Breast epithelium (tissue), 4 donors: ENCODE measurements at regions of chr13 and their contacts with region 1.

Region 1: DNA sequence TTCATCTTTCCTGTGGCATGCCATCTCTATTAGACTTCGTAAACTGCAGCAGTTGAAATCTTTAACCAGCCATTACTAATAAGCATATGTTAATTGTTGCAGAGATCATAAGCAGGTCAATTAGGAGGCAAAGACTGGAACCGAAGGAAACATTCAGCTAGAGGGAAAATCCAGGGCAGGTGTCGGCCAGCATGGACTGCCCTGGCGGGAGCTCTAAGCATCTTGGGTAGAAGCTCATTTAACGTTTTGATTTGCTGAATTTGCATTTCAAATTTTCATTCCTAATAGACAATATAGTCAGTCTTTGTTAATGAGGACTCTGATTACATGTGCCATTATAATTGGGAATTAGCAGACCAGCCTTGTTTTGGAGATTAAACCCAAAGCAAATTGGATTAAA is 238.6 kb downstream of the POU4F1 start:
- DNase-seq: no peak
- H3K4me3 ChIP-seq: no peak overlapping the region
- H3K27ac ChIP-seq: no peak overlapping the region
- H3K4me1 ChIP-seq: no peaks in the 10 kb centered on the region
- H3K27me3 ChIP-seq: no peaks in the 10 kb centered on the region
- CTCF ChIP-seq: no peak
- POLR2A ChIP-seq: no peak

Region 2: DNA sequence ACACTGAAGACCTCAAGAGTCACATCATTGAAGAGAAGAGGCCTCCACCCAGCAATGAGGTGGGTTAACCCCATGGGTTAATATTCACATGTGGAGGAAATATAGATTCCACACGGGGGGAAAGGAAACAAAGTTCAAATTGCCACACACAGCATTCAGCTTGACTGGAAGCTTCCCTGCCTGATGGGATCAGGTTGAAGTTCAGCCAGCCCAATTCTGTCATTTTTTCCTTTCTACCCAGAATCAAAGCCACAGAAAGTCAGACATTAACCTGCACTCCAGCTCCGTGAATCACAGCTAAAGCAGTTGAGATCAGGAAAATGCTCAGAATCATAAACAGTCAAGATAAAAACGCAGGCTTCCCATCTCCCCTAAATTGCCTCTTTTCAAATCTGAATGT is 502.9 kb after region 1 on chr13:
- intact Hi-C with region 1: loop called (anchors 5 kb)
- DNase-seq: no peak
- H3K4me3 ChIP-seq: no peak overlapping the region
- H3K27ac ChIP-seq: no peak overlapping the region
- H3K4me1 ChIP-seq: no peaks in the 10 kb centered on the region
- H3K27me3 ChIP-seq: no peaks in the 10 kb centered on the region
- CTCF ChIP-seq: no peak
- POLR2A ChIP-seq: no peak